Caco-2 (cell line): ENCODE measurements at regions of chr4 and their contacts with region 1.

Region 1: DNA sequence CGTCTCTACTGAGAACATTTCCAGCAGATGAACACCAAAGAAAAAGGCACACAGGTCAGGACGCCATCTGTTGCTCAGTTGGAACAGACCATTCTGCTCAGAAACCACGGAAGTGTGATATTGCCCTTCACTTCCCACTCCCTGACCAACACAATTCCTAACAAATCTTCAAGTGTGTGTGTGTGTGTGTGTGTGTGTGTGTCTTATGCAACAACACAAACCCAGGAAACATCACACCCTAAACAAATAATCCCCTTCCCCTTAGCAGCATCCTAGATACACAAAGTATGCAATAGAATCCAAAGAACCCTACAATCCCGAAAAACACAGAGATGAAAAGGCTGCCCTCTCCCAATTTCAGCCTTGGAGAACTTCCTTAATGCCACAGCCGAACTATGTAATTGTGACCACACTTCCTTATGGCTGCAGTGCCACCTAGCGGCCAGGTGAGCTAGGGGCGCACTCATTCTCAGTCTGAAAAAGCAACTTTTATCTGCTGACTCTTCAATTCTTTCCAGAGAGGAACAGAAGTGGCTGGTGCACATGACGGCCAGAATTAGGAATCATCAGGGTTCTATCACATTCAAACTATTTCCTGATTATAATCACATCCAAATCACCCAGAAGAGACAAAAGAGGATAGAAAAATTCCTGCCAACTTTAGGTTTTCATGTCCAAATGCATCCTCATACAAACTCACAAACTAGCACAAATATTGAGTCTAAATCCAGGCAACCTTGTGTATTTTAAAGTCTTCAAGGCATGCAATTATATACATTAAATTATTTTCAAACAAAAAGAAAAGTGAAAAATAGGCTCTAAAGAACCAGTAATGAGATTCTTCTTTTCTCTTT is 164.9 kb downstream of the DHX15 start:
- DNase-seq: peak; percentile 63 to 79
- H3K4me3 ChIP-seq: no peak overlapping the region
- H3K4me3 Mint-ChIP-seq: no peak overlapping the region
- H3K27ac Mint-ChIP-seq: no peak overlapping the region
- H3K4me1 ChIP-seq: no peaks in the 10 kb centered on the region
- H3K4me1 Mint-ChIP-seq: no peaks in the 10 kb centered on the region
- H3K27me3 ChIP-seq: no peaks in the 10 kb centered on the region; the same call in 1 of the 2 replicates
- H3K27me3 Mint-ChIP-seq: peaks cover 13% of the 10 kb centered on the region
- CTCF ChIP-seq: peak; percentile 84 to 92

Region 2: GRCh38 chr4:23455456-23456158 is 963.8 kb before region 1 on chr4:
- CTCF ChIA-PET with region 1: no interaction called
- POLR2A ChIA-PET with region 1: no interaction called
- intact Hi-C with region 1: loop called (anchors 5 kb)
- DNase-seq: peak; percentile 35 to 37
- H3K4me3 ChIP-seq: no peak overlapping the region
- H3K4me3 Mint-ChIP-seq: no peak overlapping the region
- H3K27ac Mint-ChIP-seq: no peak overlapping the region
- H3K4me1 ChIP-seq: no peaks in the 10 kb centered on the region
- H3K4me1 Mint-ChIP-seq: no peaks in the 10 kb centered on the region
- H3K27me3 ChIP-seq: no peaks in the 10 kb centered on the region
- H3K27me3 Mint-ChIP-seq: peaks cover 9% of the 10 kb centered on the region
- CTCF ChIP-seq: peak; percentile 30 to 53

Region 3: DNA sequence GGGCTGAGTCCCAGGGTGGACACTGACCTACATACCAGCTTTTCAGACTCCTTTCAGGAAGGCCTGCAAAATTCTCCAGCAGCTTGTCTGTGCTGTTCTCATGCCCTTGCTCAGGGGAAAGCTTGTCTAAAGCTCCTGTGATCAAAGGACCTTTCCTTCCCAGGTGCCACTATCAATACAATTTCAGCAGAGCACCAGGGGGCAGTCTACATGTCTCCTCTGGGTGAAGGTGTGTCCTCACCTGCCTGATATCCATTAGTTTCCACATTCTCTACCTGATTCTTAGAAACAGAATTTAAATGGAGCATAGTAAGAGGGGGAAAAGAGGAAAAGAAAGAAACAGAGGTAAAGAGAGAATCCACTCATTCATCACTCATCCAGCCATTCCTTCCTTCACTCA is 643.7 kb before region 1 on chr4:
- CTCF ChIA-PET with region 1: no interaction called
- POLR2A ChIA-PET with region 1: no interaction called
- intact Hi-C with region 1: loop called (anchors 1 kb)
- DNase-seq: peak in 1 of 2 experiments; percentile 17
- H3K4me3 ChIP-seq: no peak overlapping the region
- H3K4me3 Mint-ChIP-seq: no peak overlapping the region
- H3K27ac Mint-ChIP-seq: no peak overlapping the region
- H3K4me1 ChIP-seq: no peaks in the 10 kb centered on the region
- H3K4me1 Mint-ChIP-seq: no peaks in the 10 kb centered on the region
- H3K27me3 ChIP-seq: no peaks in the 10 kb centered on the region
- H3K27me3 Mint-ChIP-seq: no peaks in the 10 kb centered on the region
- CTCF ChIP-seq: peak; percentile 15 to 26

Region 4: DNA sequence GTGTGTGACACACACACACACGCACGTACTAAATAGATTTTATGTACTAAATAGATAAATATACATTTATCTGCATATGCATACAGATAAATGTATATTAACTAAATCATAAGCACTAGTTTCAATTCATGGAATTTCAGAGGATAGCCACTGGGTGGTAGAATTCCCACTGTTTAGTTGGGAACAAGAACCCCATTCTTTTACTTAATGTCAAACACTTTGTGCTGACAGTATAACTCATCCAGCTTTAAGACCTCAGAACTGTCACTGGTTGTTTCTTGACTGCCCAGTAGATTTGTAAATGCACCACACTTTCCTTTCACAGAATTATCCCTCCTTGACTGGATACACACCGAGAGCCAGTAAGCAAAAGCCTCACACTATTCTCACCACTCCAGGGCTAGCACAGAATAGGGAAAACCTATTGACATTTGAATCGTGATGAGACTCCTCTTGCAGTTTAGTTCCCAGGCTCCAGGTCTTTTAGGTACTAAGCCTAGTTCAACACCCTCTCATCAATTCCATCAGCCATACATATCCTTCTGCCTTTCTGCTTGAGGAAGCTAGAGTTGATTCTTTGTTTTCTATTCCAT is 561.9 kb before region 1 on chr4:
- CTCF ChIA-PET with region 1: no interaction called
- POLR2A ChIA-PET with region 1: no interaction called
- intact Hi-C with region 1: loop called (anchors 1 kb)
- DNase-seq: no peak
- H3K4me3 ChIP-seq: no peak overlapping the region
- H3K4me3 Mint-ChIP-seq: no peak overlapping the region
- H3K27ac Mint-ChIP-seq: no peak overlapping the region
- H3K4me1 ChIP-seq: no peaks in the 10 kb centered on the region
- H3K4me1 Mint-ChIP-seq: no peaks in the 10 kb centered on the region
- H3K27me3 ChIP-seq: no peaks in the 10 kb centered on the region
- H3K27me3 Mint-ChIP-seq: no peaks in the 10 kb centered on the region
- CTCF ChIP-seq: no peak

Region 5: DNA sequence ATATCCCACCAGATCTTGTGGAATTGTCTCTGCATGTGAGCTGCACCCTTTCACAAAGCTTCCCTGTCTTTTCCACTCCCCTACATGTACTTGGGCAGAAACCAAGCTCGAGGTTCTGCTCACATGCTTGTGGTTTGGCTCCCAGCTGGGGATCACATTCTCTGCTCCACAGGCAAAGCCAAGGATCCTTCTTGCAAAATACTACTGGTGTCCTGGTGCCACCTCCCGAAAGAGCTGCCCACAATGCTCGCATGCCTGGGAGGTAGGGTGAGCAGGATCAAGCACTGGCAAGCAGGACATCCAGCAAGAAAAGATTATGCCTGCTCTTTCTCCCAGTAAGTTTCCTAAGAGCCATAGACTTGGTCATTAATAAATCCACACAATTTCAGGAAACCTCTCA is 484.5 kb before region 1 on chr4:
- CTCF ChIA-PET with region 1: no interaction called
- POLR2A ChIA-PET with region 1: no interaction called
- intact Hi-C with region 1: loop called (anchors 1 kb)
- DNase-seq: no peak
- H3K4me3 ChIP-seq: no peak overlapping the region
- H3K4me3 Mint-ChIP-seq: no peak overlapping the region
- H3K27ac Mint-ChIP-seq: no peak overlapping the region
- H3K4me1 ChIP-seq: no peaks in the 10 kb centered on the region
- H3K4me1 Mint-ChIP-seq: no peaks in the 10 kb centered on the region
- H3K27me3 ChIP-seq: no peaks in the 10 kb centered on the region
- H3K27me3 Mint-ChIP-seq: peaks cover 5% of the 10 kb centered on the region
- CTCF ChIP-seq: no peak

Region 6: GRCh38 chr4:23999714-24000469 is 419.5 kb before region 1 on chr4:
- CTCF ChIA-PET with region 1: no interaction called
- POLR2A ChIA-PET with region 1: no interaction called
- intact Hi-C with region 1: loop called (anchors 10 kb)
- DNase-seq: no peak
- H3K4me3 ChIP-seq: no peak overlapping the region
- H3K4me3 Mint-ChIP-seq: no peak overlapping the region
- H3K27ac Mint-ChIP-seq: no peak overlapping the region
- H3K4me1 ChIP-seq: no peaks in the 10 kb centered on the region
- H3K4me1 Mint-ChIP-seq: no peaks in the 10 kb centered on the region
- H3K27me3 ChIP-seq: no peaks in the 10 kb centered on the region
- H3K27me3 Mint-ChIP-seq: peaks cover 9% of the 10 kb centered on the region
- CTCF ChIP-seq: no peak

Region 7: GRCh38 chr4:24164054-24164693 is 255.2 kb before region 1 on chr4:
- CTCF ChIA-PET with region 1: no interaction called
- POLR2A ChIA-PET with region 1: no interaction called
- intact Hi-C with region 1: loop called (anchors 10 kb)
- DNase-seq: no peak
- H3K4me3 ChIP-seq: no peak overlapping the region
- H3K4me3 Mint-ChIP-seq: no peak overlapping the region
- H3K27ac Mint-ChIP-seq: no peak overlapping the region
- H3K4me1 ChIP-seq: no peaks in the 10 kb centered on the region
- H3K4me1 Mint-ChIP-seq: no peaks in the 10 kb centered on the region
- H3K27me3 ChIP-seq: no peaks in the 10 kb centered on the region
- H3K27me3 Mint-ChIP-seq: peaks cover 14% of the 10 kb centered on the region
- CTCF ChIP-seq: no peak

Region 8: GRCh38 chr4:24352112-24352511 is 67.3 kb before region 1 on chr4:
- CTCF ChIA-PET with region 1: no interaction called
- POLR2A ChIA-PET with region 1: no interaction called
- intact Hi-C with region 1: no loop called
- DNase-seq: no peak
- H3K4me3 ChIP-seq: no peak overlapping the region
- H3K4me3 Mint-ChIP-seq: no peak overlapping the region
- H3K27ac Mint-ChIP-seq: no peak overlapping the region
- H3K4me1 ChIP-seq: no peaks in the 10 kb centered on the region
- H3K4me1 Mint-ChIP-seq: no peaks in the 10 kb centered on the region
- H3K27me3 ChIP-seq: no peaks in the 10 kb centered on the region; the same call in 1 of the 2 replicates
- H3K27me3 Mint-ChIP-seq: peaks cover 18% of the 10 kb centered on the region
- CTCF ChIP-seq: no peak